HEK293 (cell line): ENCODE measurements at regions of chr17 and their contacts with region 1.

Region 1: DNA sequence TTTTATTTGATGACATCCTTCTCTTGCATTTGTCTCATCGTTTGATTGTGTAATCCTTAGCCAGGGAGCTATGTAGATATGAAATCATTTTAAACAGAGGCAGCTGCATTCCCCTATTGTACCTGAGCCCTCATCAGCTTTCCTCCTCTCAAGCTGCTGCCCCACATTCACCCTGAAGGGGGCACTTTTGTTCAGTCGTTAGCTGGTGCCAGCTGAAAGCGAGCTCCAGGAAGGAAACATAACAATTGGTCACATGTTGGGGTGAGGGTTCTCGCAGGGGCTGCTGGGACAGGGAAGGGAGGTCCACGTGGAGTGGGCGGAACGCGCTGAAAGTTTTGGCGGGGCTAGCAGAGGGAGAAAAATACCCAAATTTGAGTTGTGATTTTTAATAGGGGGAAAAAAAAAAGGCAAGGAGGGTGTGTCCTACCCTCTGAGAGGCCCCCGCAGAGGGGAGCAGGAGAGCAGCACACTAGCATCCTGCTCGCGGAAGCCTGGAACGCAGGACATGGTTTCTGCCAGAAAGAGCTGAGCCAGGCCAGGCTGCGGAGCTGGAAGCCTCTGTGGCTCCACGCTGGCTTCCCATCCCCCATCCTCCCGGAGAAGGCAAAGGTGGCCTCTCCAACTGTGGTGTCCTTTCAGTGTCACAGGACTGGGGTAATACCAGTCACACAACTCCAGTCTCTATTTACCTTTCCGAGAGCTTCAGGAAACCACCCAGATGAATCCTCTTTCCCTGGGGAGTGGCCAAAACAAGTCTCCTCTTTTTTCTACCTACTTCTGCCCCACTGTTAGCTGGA is 8.5 kb upstream of the MSL1 start:
- H3K4me3 ChIP-seq: peak overlapping the region; percentile 38
- H3K27ac ChIP-seq: peak overlapping the region; percentile 79
- H3K4me1 ChIP-seq: peaks cover 31% of the 10 kb centered on the region
- CTCF ChIP-seq: peak; percentile 80; the same call in 1 of the 2 replicates

Region 2: GRCh38 chr17:40015005-40015997 is 98.0 kb before region 1 on chr17 and contains the start of gene CSF3:
- CTCF ChIA-PET with region 1: interaction called, 61 read pairs
- POLR2A ChIA-PET with region 1: interaction called, 10 read pairs
- H3K4me3 ChIP-seq: no peak within 1 kb of the TSS
- H3K27ac ChIP-seq: no peak within 1 kb of the TSS
- H3K4me1 ChIP-seq: no peaks in the 10 kb centered on the region
- CTCF ChIP-seq: no peak

Region 3: GRCh38 chr17:40062329-40063186 is 50.8 kb before region 1 on chr17 and contains the start of gene THRA:
- CTCF ChIA-PET with region 1: interaction called, 12 read pairs
- POLR2A ChIA-PET with region 1: interaction called, 7 read pairs
- H3K4me3 ChIP-seq: peak within 1 kb of the TSS; percentile 84
- H3K27ac ChIP-seq: peak within 1 kb of the TSS; percentile 86; the same call in 1 of the 2 replicates
- H3K4me1 ChIP-seq: peaks cover 17% of the 10 kb centered on the region
- CTCF ChIP-seq: no peak

Region 4: DNA sequence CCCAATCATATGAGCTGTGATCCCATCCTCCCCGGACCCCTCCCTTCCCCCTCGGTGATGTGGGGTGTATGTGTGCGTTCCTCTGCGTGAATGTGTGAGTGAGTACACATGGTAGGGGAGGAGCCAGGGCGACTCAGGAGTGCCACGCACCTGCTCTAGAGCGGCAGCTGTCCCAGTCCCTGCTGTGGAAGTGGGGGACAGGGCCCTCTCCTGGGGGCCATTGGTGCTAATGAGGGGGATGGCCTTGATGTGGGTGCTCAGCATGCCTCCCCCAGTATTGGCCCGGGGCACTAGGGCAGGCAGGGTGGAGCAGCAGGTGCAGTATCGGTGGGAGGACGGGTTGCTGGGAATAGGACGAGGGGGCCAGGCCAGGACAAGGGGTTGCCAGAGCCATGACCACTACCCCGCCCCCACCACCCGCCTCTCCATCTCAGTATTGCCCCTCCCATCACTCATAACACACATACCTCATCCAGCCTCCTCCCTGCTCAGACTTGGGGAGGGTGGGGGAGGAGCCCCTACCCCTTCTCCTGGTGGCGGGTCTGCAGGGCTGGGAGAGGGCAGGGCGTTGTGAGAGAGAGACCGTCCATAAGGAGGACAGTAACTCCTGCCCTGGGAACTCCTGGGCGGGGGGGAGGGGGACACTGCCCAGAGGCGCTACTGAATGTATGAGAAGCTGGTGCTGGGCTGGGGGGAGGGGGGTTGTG is 21.5 kb before region 1 on chr17:
- CTCF ChIA-PET with region 1: interaction called, 24 read pairs
- POLR2A ChIA-PET with region 1: interaction called, 117 read pairs
- H3K4me3 ChIP-seq: no peak overlapping the region
- H3K27ac ChIP-seq: no peak overlapping the region
- H3K4me1 ChIP-seq: no peaks in the 10 kb centered on the region
- CTCF ChIP-seq: no peak

Region 5: DNA sequence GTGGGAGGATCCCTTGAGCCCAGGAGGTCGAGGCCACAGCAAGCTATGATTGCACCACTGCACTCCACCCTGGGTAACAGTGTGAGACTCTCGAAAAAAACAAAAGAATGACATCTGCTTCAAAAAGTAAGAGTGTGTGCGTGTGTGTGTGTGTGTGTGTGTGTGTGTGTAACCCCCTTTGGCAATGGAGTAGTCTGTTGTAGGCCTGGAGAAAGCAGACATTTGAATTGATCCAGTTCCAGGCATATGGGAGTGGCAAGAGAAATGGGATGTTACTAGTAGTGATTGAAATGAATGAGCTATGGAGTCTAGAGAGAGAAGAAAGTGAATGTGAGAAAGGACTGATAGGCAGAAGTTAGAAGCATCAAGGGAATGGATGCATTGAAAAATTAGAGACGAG is 37.0 kb after region 1 on chr17:
- CTCF ChIA-PET with region 1: interaction called, 19 read pairs
- POLR2A ChIA-PET with region 1: interaction called, 4 read pairs
- H3K4me3 ChIP-seq: no peak overlapping the region
- H3K27ac ChIP-seq: no peak overlapping the region
- H3K4me1 ChIP-seq: no peaks in the 10 kb centered on the region
- CTCF ChIP-seq: no peak

Region 6: GRCh38 chr17:40177275-40177874 is 64.1 kb after region 1 on chr17 and contains the start of gene RAPGEFL1:
- CTCF ChIA-PET with region 1: interaction called, 40 read pairs
- POLR2A ChIA-PET with region 1: interaction called, 10 read pairs
- H3K4me3 ChIP-seq: peak within 1 kb of the TSS; percentile 12; the same call in 1 of the 2 replicates
- H3K27ac ChIP-seq: no peak within 1 kb of the TSS
- H3K4me1 ChIP-seq: peaks cover 9% of the 10 kb centered on the region
- CTCF ChIP-seq: no peak

Region 7: GRCh38 chr17:40219073-40219860 is 106.0 kb after region 1 on chr17 and contains the start of gene WIPF2:
- CTCF ChIA-PET with region 1: interaction called, 13 read pairs
- POLR2A ChIA-PET with region 1: interaction called, 14 read pairs
- H3K4me3 ChIP-seq: peak within 1 kb of the TSS; percentile 80
- H3K27ac ChIP-seq: peak within 1 kb of the TSS; percentile 92
- H3K4me1 ChIP-seq: peaks cover 3% of the 10 kb centered on the region
- CTCF ChIP-seq: peak; percentile 96

Region 8: GRCh38 chr17:40516581-40517285 is 403.4 kb after region 1 on chr17:
- CTCF ChIA-PET with region 1: no interaction called
- POLR2A ChIA-PET with region 1: no interaction called
- H3K4me3 ChIP-seq: no peak overlapping the region
- H3K27ac ChIP-seq: no peak overlapping the region
- H3K4me1 ChIP-seq: no peaks in the 10 kb centered on the region
- CTCF ChIP-seq: no peak